Vagina (tissue), 2 donors: ENCODE measurements at regions of chr14 and their contacts with region 1.

Region 1: GRCh38 chr14:69715725-69716477 is 51.0 kb upstream of the SRSF5 start:
- DNase-seq: no peak
- H3K4me3 ChIP-seq: no peak overlapping the region
- H3K27ac ChIP-seq: peak overlapping the region; percentile 31
- H3K4me1 ChIP-seq: peaks cover 56% of the 10 kb centered on the region
- H3K27me3 ChIP-seq: no peaks in the 10 kb centered on the region
- CTCF ChIP-seq: no peak
- POLR2A ChIP-seq: no peak

Region 2: GRCh38 chr14:68905107-68905895 is 810.6 kb before region 1 on chr14:
- intact Hi-C with region 1: no loop called
- DNase-seq: no peak
- H3K4me3 ChIP-seq: no peak overlapping the region
- H3K27ac ChIP-seq: no peak overlapping the region
- H3K4me1 ChIP-seq: no peaks in the 10 kb centered on the region
- H3K27me3 ChIP-seq: no peaks in the 10 kb centered on the region
- CTCF ChIP-seq: no peak
- POLR2A ChIP-seq: no peak

Region 3: DNA sequence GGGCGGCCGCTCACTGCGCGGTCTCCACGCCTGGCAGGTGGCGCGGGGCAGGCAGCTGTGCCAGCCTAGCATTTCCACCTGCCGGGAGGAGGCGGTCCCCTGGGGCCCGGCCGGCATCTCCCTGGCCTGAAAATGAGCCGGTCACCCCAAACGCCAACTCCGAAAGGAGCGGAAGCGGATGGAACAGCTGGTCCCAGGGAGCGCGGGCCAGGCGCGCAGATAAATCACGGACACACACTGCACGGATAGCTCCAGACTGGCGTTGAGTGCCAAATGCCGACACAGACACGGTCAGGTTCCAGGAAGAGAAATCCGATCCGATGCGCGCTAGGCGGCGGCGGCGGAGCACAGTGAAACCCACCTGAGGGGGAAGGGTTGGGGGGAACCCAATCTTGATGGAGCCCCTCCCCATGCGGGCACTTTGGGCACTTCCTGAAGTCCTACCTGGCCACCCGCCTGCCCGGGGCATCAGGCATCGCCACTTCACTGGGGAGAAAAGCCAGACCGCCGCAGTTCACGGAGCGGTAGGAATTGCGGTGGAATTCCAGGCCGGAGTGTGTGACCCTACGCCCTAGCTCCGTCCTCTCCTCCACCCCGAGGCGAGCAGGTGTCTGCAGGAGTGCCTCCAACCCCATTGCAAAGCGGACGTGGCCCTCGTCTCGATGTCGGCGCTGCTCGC is 232.0 kb before region 1 on chr14:
- intact Hi-C with region 1: no loop called
- DNase-seq: no peak
- H3K4me3 ChIP-seq: peak overlapping the region; percentile 27 to 38
- H3K27ac ChIP-seq: no peak overlapping the region
- H3K4me1 ChIP-seq: peaks cover 18% of the 10 kb centered on the region
- H3K27me3 ChIP-seq: no peaks in the 10 kb centered on the region
- CTCF ChIP-seq: no peak
- POLR2A ChIP-seq: no peak

Region 4: GRCh38 chr14:69611201-69612011 is 104.5 kb before region 1 on chr14 and contains the start of gene SUSD6:
- intact Hi-C with region 1: loop called (anchors 5 kb)
- DNase-seq: no peak
- H3K4me3 ChIP-seq: peak within 1 kb of the TSS; percentile 92 to 93
- H3K27ac ChIP-seq: peak within 1 kb of the TSS; percentile 97
- H3K4me1 ChIP-seq: peaks cover 65% of the 10 kb centered on the region
- H3K27me3 ChIP-seq: no peaks in the 10 kb centered on the region
- CTCF ChIP-seq: no peak
- POLR2A ChIP-seq: peak in 1 of 2 donors; percentile 52
- total RNA-seq, gene SUSD6: 36.6 TPM

Region 5: GRCh38 chr14:69666690-69667239 is 49.1 kb before region 1 on chr14:
- intact Hi-C with region 1: loop called (anchors 10 kb)
- DNase-seq: no peak
- H3K4me3 ChIP-seq: no peak overlapping the region
- H3K27ac ChIP-seq: peak overlapping the region; percentile 17
- H3K4me1 ChIP-seq: peaks cover 72% of the 10 kb centered on the region
- H3K27me3 ChIP-seq: no peaks in the 10 kb centered on the region
- CTCF ChIP-seq: no peak
- POLR2A ChIP-seq: no peak

Region 6: GRCh38 chr14:69682136-69682535 is 33.8 kb before region 1 on chr14:
- intact Hi-C with region 1: no loop called
- DNase-seq: no peak
- H3K4me3 ChIP-seq: no peak overlapping the region
- H3K27ac ChIP-seq: no peak overlapping the region
- H3K4me1 ChIP-seq: peaks cover 60% of the 10 kb centered on the region
- H3K27me3 ChIP-seq: no peaks in the 10 kb centered on the region
- CTCF ChIP-seq: no peak
- POLR2A ChIP-seq: no peak

Region 7: GRCh38 chr14:70317969-70318634 is 602.2 kb after region 1 on chr14:
- intact Hi-C with region 1: no loop called
- DNase-seq: no peak
- H3K4me3 ChIP-seq: no peak overlapping the region
- H3K27ac ChIP-seq: no peak overlapping the region
- H3K4me1 ChIP-seq: no peaks in the 10 kb centered on the region
- H3K27me3 ChIP-seq: no peaks in the 10 kb centered on the region
- CTCF ChIP-seq: no peak
- POLR2A ChIP-seq: no peak